ENCODE measurements at regions of chr18 and their contacts with region 1.

Region 1: DNA sequence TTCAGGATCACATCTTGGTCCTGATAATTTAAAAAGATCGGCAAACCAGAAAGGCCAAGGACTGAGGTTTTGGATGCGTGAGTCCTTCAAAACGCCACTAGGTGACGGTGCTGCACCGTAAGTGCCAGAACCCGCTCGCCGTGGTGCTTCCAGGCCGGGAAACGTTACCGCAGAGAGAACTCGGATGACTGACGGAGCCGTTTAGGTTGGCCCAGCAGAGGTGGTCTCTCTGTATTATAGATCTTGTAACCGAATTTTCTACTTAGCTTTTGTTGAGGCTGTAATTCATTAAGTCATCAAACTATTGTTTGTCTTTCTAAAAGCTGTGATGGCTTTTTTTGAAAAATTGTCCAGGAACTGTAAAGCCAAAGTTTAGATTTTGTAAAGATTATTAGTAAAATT is 39.8 kb upstream of the ADCYAP1 start:
- DNase-seq: peak in 1 of 2 donors; percentile 79
- H3K4me3 ChIP-seq: no peak overlapping the region
- H3K27ac ChIP-seq: no peak overlapping the region
- H3K4me1 ChIP-seq: no peaks in the 10 kb centered on the region
- H3K27me3 ChIP-seq: no peaks in the 10 kb centered on the region
- CTCF ChIP-seq: peak; percentile 90 to 97 (median 96)

Region 2: DNA sequence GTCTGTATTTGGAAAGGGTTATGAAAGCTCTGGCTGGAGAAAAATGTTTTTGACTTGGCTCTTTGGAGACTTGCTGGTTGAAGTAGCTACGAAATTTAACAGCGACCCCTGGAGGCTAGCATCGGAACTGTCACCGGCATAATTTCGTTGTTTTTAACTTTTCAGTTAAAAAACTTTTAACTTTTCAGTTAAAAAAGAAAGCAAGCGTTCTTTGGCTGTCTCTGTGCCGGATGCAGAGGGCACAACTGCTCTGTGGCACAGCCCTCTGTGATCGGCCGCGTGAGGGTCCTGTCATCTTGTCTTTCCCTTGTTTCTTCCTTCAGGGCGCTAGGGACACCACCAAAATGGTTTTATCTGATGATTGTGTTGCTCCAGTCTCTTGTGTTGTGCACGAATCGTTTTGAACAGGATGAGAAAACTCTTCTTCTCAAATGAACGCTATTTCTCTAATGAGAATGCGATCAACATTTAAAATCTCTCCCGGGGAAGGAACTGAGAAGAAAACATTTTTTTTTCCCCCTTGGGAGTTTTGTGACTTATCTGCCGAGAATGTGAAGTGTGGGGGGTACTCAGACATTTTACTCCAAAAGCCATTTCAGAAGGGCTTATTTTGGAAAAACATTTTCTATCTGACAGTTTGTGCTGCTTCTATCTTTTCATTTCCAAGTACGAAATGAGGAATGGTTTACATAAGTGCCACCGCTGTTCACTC is 96.9 kb after region 1 on chr18:
- intact Hi-C with region 1: loop called (anchors 2 kb)
- DNase-seq: no peak
- H3K4me3 ChIP-seq: peak overlapping the region; percentile 45 to 64
- H3K27ac ChIP-seq: peak overlapping the region; percentile 37 to 62
- H3K4me1 ChIP-seq: no peaks in the 10 kb centered on the region
- H3K27me3 ChIP-seq: no peaks in the 10 kb centered on the region
- CTCF ChIP-seq: peak; percentile 46 to 96 (median 87)

Region 3: GRCh38 chr18:1213126-1213525 is 348.3 kb after region 1 on chr18:
- intact Hi-C with region 1: loop called (anchors 10 kb)
- DNase-seq: no peak
- H3K4me3 ChIP-seq: no peak overlapping the region
- H3K27ac ChIP-seq: no peak overlapping the region
- H3K4me1 ChIP-seq: no peaks in the 10 kb centered on the region
- H3K27me3 ChIP-seq: no peaks in the 10 kb centered on the region
- CTCF ChIP-seq: no peak